A549 (cell line): ENCODE measurements at regions of chr1 and their contacts with region 1.

Region 1: GRCh38 chr1:192477630-192478029 is 97.9 kb upstream of the RGS1 start:
- DNase-seq: peak; percentile 33 to 40
- ATAC-seq: peak in 1 of 2 experiments; percentile 70; a peak in 2 of 6 replicates
- H3K4me3 ChIP-seq: no peak overlapping the region
- H3K27ac ChIP-seq: no peak overlapping the region; a peak in 1 of 6 replicates
- H3K4me1 ChIP-seq: no peaks in the 10 kb centered on the region
- CTCF ChIP-seq: peak; percentile 88
- EP300 ChIP-seq: no peak
- POLR2A ChIP-seq: no peak
- RAD21 ChIP-seq: peak; percentile 90 to 95

Region 2: GRCh38 chr1:192418552-192419285 is 58.9 kb before region 1 on chr1:
- CTCF ChIA-PET with region 1: no interaction called
- POLR2A ChIA-PET with region 1: no interaction called
- DNase-seq: no peak
- ATAC-seq: no peak
- H3K4me3 ChIP-seq: no peak overlapping the region
- H3K27ac ChIP-seq: no peak overlapping the region
- H3K4me1 ChIP-seq: no peaks in the 10 kb centered on the region
- CTCF ChIP-seq: no peak
- EP300 ChIP-seq: no peak
- POLR2A ChIP-seq: no peak
- RAD21 ChIP-seq: no peak

Region 3: GRCh38 chr1:192445848-192446489 is 31.7 kb before region 1 on chr1:
- CTCF ChIA-PET with region 1: no interaction called
- POLR2A ChIA-PET with region 1: no interaction called
- DNase-seq: peak in 1 of 2 experiments; percentile 41
- ATAC-seq: peak in 1 of 2 experiments; percentile 61; a peak in 2 of 6 replicates
- H3K4me3 ChIP-seq: no peak overlapping the region
- H3K27ac ChIP-seq: no peak overlapping the region
- H3K4me1 ChIP-seq: peaks cover 20% of the 10 kb centered on the region
- CTCF ChIP-seq: peak; percentile 79
- EP300 ChIP-seq: no peak
- POLR2A ChIP-seq: no peak
- RAD21 ChIP-seq: peak; percentile 88 to 89

Region 4: DNA sequence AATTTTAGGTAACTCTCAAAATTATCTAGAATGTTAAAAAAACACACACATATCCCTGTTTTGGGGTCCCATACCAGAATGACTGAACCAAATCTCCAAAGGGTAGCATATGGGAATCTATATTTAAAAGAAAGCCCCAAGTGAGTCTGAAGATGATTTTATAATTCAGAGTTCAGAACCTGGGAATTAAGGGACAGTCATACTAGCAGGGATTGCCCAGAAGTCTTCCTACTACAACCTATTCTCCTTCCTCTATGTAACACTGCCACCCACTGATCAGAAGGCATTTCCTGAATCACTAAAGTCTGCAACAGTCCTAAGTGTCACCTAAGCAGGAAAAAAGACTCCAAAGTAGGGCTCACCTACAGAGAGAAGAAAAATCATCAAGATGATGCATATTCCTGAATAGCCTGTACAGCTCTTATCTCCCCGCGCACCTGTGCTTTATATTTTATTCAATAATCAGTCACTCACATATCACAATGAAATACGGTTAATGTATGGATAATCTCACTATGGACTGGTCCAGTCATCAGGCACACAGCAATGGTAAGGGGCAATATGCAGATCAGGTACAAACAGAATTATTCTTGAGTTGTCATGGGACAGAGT is 102.8 kb after region 1 on chr1:
- CTCF ChIA-PET with region 1: interaction called, 52 read pairs
- POLR2A ChIA-PET with region 1: no interaction called
- DNase-seq: peak in 1 of 2 experiments; percentile 64
- ATAC-seq: peak; percentile 93 to 94
- H3K4me3 ChIP-seq: no peak overlapping the region
- H3K27ac ChIP-seq: no peak overlapping the region; a peak in 1 of 6 replicates
- H3K4me1 ChIP-seq: no peaks in the 10 kb centered on the region
- CTCF ChIP-seq: peak; percentile 66
- EP300 ChIP-seq: no peak
- POLR2A ChIP-seq: no peak
- RAD21 ChIP-seq: peak; percentile 89 to 90

Region 5: DNA sequence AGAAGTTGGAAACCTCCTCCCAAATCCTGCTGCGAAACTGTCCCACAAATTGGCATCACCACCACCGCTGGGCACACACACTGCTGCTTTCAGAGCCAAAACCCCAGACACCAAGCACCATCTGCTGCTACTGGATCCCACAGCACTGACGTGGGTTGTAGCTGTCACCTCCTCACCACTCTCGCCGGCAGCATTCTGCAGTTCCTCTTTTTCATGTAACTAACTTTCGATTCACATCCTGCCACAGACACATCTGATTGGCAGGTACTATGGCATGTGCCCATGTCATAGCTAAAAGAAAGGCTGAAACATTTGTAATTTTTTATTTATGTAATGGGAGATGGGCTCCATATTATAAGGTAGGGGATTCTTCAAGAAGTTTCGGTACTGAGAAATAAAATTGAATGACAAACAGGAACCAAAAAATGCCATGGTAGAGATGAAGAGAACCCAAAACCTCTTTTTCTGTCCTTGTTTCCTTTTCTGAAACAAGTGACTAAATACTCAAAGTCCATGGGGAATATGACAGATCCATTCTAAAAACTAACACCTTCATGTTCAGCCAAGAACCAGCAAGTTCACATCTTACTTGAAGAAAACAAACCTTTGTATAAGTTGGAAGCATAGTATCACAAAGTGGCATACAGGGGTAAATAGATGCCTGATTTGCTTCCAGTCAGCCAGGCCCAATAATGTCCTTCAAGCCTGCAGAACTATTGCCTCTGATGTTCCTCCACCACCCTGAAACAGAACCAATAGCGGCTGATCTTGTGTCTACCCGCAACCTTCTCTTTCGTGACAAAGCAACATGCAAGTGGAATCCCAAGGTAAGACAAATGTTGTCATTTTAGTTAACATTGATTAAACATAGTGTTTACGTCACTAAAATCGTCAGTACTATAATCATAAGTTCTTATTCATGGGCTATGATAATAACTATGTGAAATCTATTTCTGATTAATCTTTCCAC is 131.8 kb after region 1 on chr1:
- CTCF ChIA-PET with region 1: interaction called, 19 read pairs
- POLR2A ChIA-PET with region 1: no interaction called
- DNase-seq: no peak
- ATAC-seq: no peak
- H3K4me3 ChIP-seq: no peak overlapping the region
- H3K27ac ChIP-seq: no peak overlapping the region
- H3K4me1 ChIP-seq: 0 out of 3 replicates have a peak, but pooled peaks cover 3% of the 10 kb centered on the region
- CTCF ChIP-seq: no peak
- EP300 ChIP-seq: no peak
- POLR2A ChIP-seq: no peak
- RAD21 ChIP-seq: no peak

Region 6: DNA sequence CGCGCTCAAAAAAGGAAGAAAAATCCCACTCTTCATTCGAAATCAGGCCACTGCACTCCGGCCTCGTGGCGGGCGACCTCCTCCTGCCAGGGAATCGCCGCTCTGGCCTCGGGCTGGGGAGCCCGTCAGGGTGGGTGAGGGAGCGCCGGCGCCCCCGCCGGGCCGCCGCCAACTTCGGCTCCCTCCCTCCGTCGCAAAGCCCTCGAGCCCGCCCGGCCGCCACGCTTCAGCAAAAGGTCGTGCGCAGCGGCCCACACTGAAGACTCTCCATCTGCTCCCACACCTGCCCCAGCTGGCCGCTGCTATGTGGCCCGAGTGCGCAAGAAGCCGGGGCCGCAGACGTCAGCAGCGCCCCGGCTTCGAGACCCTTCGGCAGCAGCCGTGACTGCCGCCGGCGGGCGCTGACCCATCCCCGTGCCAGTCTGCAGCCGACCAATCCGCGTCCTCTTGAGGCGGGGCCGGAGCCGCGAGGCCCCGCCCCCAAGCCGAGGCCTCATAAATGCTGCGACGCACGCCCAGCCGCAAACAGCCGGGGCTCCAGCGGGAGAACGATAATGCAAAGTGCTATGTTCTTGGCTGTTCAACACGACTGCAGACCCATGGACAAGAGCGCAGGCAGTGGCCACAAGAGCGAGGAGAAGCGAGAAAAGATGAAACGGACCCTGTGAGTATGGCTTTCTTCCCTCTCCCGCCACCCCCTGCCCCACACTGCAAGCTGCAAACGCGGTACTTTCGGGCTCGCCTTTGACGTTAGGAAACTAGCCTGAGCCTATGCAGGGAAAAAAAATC is 331.1 kb after region 1 on chr1 and contains the start of gene RGS2:
- CTCF ChIA-PET with region 1: interaction called, 16 read pairs
- POLR2A ChIA-PET with region 1: interaction called, 7 read pairs
- DNase-seq: peak; percentile 88 to 93
- ATAC-seq: peak; percentile 91 to 96
- H3K4me3 ChIP-seq: peak within 1 kb of the TSS; percentile 63
- H3K27ac ChIP-seq: peak within 1 kb of the TSS; percentile 87 to 90
- H3K4me1 ChIP-seq: peaks cover 41% of the 10 kb centered on the region
- CTCF ChIP-seq: peak; percentile 39
- EP300 ChIP-seq: no peak
- POLR2A ChIP-seq: peak; percentile 99
- RAD21 ChIP-seq: peak; percentile 14 to 36; a peak in 2 of 5 replicates
- polyA plus RNA-seq, gene RGS2: 17.9 and 26.5 TPM in 2 replicates

Region 7: GRCh38 chr1:193019442-193020026 is 541.9 kb after region 1 on chr1:
- CTCF ChIA-PET with region 1: interaction called, 18 read pairs
- POLR2A ChIA-PET with region 1: no interaction called
- DNase-seq: peak; percentile 25 to 63
- ATAC-seq: peak; percentile 59 to 80; a peak in 5 of 6 replicates
- H3K4me3 ChIP-seq: no peak overlapping the region
- H3K27ac ChIP-seq: peak overlapping the region in 1 of 2 experiments; percentile 6; a peak in 1 of 6 replicates
- H3K4me1 ChIP-seq: peaks cover 5% of the 10 kb centered on the region; the same call in 2 of the 3 replicates
- CTCF ChIP-seq: peak; percentile 86
- EP300 ChIP-seq: no peak
- POLR2A ChIP-seq: no peak
- RAD21 ChIP-seq: peak; percentile 77 to 82

Region 8: DNA sequence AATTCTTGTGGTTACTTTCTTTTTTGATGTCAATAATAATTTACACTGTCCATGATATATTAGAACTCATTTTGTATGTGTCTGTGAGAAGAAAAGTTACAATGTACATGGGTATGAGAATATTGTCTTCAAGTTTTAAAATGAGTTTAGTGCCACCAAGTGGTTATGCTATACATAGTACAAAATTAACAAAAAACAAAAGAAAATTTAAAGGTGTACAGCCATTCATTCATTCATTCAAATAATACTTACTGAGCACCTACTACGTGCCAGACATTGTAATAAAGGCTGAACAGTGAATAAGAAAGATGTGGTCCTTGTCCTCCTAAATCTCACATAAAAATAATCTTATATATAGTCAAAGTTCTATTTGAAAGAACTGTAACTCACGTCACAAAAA is 553.8 kb after region 1 on chr1:
- CTCF ChIA-PET with region 1: interaction called, 12 read pairs
- POLR2A ChIA-PET with region 1: no interaction called
- DNase-seq: no peak
- ATAC-seq: peak; percentile 50 to 66; a peak in 2 of 6 replicates
- H3K4me3 ChIP-seq: no peak overlapping the region
- H3K27ac ChIP-seq: no peak overlapping the region
- H3K4me1 ChIP-seq: peaks cover 3% of the 10 kb centered on the region; the same call in 1 of the 3 replicates
- CTCF ChIP-seq: peak; percentile 51
- EP300 ChIP-seq: no peak
- POLR2A ChIP-seq: no peak
- RAD21 ChIP-seq: peak; percentile 27 to 54; a peak in 3 of 5 replicates